Ovary (tissue), 10 donors: ENCODE measurements at regions of chr2 and their contacts with region 1.

Region 1: GRCh38 chr2:26846328-26847306 is 1.3 kb upstream of the DPYSL5 start:
- DNase-seq: peak; percentile 48 to 74 (median 62)
- H3K4me3 ChIP-seq: no peak overlapping the region
- H3K27ac ChIP-seq: no peak overlapping the region
- H3K4me1 ChIP-seq: peaks cover 13% of the 10 kb centered on the region
- H3K27me3 ChIP-seq: peaks cover 5% of the 10 kb centered on the region
- CTCF ChIP-seq: peak; percentile 57 to 60 (median 59)
- EP300 ChIP-seq: no peak
- POLR2A ChIP-seq: no peak

Region 2: GRCh38 chr2:26911911-26912861 is 65.6 kb after region 1 on chr2:
- intact Hi-C with region 1: no loop called
- DNase-seq: no peak
- H3K4me3 ChIP-seq: no peak overlapping the region
- H3K27ac ChIP-seq: no peak overlapping the region
- H3K4me1 ChIP-seq: no peaks in the 10 kb centered on the region
- H3K27me3 ChIP-seq: no peaks in the 10 kb centered on the region
- CTCF ChIP-seq: no peak
- EP300 ChIP-seq: no peak
- POLR2A ChIP-seq: no peak

Region 3: DNA sequence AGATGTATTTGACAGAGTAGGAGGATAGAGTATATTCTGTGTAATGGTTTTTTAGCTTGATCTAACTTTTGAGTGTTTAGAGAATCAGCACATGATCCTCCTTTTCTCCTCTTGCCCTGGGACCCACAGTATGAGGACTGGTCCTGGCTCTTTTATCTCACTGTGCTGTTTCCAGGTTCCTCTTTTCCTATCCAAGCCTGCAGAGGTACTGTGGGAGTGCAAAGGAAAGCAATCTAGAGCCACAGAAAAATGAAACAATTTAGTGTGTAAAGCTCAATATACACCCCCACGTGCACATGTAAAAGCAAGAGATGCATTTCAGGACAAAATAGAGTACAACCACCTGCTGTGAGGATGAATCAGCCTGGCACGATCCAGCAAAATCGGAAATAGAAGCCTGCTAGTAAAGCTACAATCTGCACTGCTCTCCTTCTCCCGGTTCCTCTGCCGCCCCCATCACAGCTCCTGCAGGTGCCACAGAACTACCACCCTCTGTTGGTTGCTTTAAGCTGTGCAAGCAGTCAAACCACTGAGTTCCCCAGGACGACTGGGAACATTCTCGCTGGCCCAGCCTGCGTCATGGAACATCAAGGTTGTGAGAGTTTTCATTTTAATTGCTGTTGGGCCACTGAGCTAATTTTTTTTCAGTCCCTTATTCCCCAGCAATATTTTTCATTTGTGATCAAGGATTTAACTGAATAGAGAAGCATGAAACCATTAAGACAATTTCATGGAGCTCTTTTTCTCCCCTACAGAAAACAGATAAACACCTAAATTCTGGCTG is 76.0 kb after region 1 on chr2:
- intact Hi-C with region 1: loop called in 1 of 4 experiments (anchors 10 kb)
- DNase-seq: peak in 4 of 5 donors; percentile 33 to 58 (median 42)
- H3K4me3 ChIP-seq: no peak overlapping the region
- H3K27ac ChIP-seq: no peak overlapping the region
- H3K4me1 ChIP-seq: peaks cover 3% of the 10 kb centered on the region
- H3K27me3 ChIP-seq: no peaks in the 10 kb centered on the region
- CTCF ChIP-seq: peak in 1 of 3 donors; percentile 31
- EP300 ChIP-seq: no peak
- POLR2A ChIP-seq: no peak

Region 4: DNA sequence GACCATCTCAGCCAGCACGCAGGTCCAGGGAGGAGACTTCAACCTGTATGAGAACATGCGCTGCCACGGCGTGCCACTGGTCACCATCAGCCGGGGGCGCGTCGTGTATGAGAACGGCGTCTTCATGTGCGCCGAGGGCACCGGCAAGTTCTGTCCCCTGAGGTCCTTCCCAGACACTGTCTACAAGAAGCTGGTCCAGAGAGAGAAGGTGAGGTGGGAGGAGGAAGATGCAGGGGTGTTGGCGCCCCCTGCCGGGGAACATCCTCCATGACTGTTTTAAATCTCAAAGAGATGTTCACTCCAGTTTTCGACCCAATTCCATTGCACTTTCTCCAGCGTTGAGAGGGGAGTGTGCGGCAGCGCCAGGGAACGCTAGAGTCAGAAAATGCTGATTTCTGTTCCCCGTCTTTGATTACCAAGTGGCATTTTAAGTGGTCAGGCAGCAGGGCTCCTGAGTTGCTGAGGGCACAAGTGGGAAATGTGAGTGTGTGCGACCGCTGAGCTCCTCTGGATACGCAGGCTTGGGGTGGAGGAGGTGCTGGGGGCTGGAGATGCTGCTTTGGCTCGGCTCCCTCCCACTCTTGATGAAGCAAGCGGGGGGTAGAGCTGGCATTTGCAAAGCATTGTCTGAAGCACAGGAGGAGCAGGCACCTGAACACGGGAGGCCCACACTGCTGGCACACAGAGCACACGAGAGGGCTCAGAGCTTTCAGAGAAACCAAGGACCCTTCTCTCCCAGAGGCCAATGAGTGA is 96.1 kb after region 1 on chr2:
- intact Hi-C with region 1: loop called in 3 of 4 experiments (anchors 2 to 5 kb)
- DNase-seq: peak in 4 of 5 donors; percentile 34 to 77 (median 56)
- H3K4me3 ChIP-seq: no peak overlapping the region
- H3K27ac ChIP-seq: no peak overlapping the region
- H3K4me1 ChIP-seq: no peaks in the 10 kb centered on the region
- H3K27me3 ChIP-seq: no peaks in the 10 kb centered on the region
- CTCF ChIP-seq: peak; percentile 13 to 46 (median 30)
- EP300 ChIP-seq: no peak
- POLR2A ChIP-seq: no peak

Region 5: GRCh38 chr2:27016801-27017325 is 170.2 kb after region 1 on chr2:
- intact Hi-C with region 1: loop called in 2 of 4 experiments (anchors 10 kb)
- DNase-seq: peak; percentile 62 to 79 (median 74)
- H3K4me3 ChIP-seq: no peak overlapping the region
- H3K27ac ChIP-seq: peak overlapping the region in 1 of 2 donors; percentile 27
- H3K4me1 ChIP-seq: peaks cover 20% of the 10 kb centered on the region
- H3K27me3 ChIP-seq: no peaks in the 10 kb centered on the region
- CTCF ChIP-seq: peak; percentile 51 to 80 (median 77)
- EP300 ChIP-seq: no peak
- POLR2A ChIP-seq: peak; percentile 16

Region 6: DNA sequence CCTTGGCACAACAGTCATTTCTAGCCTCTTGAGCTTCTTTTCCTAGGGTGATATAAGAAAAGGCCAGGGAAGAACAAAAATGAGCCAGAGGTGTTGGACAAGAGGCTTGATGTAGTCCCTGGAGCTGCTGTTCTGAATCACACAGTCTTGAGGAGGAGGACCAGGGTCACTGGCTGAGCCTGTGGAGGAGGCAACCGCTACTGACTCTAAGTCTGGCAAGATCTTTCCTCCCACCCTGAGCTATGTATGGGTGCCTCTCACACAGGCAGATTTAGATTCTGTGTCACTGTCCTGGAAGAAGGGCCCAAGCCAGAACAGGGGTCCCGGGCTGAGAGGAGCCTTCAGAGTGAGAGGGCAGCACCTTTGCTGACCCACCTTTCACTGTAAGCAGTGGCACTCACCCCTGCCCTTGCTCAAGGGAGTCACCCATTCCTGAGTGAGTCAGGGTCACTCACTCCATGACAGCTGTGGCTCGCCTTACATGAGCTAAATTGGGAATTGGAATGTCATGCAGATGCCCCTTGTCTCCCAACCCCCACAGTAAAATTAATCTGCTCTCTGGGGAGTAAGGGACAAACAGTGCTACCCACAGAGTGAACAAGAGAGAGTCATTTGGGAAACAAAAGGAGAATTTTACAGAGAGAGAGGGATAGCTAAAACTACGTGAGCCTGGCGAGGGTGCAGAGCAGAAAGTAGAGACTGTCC is 435.4 kb after region 1 on chr2 and contains the start of gene TRIM54:
- intact Hi-C with region 1: loop called in 2 of 4 experiments (anchors 10 kb)
- DNase-seq: no peak
- H3K4me3 ChIP-seq: no peak within 1 kb of the TSS
- H3K27ac ChIP-seq: no peak within 1 kb of the TSS
- H3K4me1 ChIP-seq: no peaks in the 10 kb centered on the region
- H3K27me3 ChIP-seq: no peaks in the 10 kb centered on the region
- CTCF ChIP-seq: no peak
- EP300 ChIP-seq: no peak
- POLR2A ChIP-seq: no peak
- total RNA-seq, gene TRIM54: 0.12 to 0.72 (median 0.49) TPM in 4 of 7 donors, not detected in the others

Region 7: DNA sequence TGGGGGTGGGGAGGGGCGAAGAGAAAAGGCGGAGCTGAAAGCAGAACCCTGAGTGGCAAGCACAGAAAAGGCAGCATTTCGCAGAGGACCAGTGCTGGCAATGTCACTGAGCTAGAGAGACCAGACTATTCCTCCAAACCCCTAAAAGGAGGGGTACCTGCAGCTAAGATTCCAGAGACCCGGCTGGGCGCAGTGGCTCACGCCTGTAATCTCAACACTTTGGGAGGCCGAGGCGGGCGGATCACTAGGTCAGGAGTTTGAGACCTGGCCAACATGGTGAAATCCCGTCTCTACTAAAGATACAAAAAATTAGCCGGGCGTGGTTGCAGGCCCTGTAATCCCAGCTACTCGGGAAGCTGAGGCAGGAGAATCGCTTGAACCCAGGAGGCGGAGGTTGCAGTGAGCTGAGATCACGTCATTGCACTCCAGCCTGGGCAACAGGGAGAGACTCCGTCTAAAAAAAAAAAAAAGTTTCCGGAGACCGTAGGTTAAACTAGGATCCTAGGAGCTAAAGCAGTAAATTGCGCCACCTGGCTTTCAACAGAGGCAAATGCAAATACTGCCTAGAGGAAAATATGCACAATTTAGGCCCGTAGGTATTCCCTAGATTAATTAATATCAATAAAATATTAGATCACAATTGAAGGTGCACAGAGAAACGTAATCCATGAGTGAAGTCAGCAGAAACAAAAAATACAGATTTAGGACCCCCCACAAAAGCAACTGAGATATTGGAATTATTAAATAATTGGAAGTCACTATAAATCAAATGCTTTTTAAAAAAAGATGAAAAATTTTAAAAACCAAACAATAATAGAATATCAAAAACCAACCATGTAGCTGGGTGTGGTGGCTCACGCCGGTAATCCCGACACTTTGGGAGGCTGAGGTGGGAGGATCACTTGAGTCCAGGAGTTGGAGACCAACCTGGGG is 456.7 kb after region 1 on chr2:
- intact Hi-C with region 1: loop called in 1 of 4 experiments (anchors 10 kb)
- DNase-seq: peak in 1 of 5 donors; percentile 38
- H3K4me3 ChIP-seq: peak overlapping the region; percentile 30
- H3K27ac ChIP-seq: no peak overlapping the region
- H3K4me1 ChIP-seq: peaks cover 4% of the 10 kb centered on the region
- H3K27me3 ChIP-seq: peaks cover 4% of the 10 kb centered on the region
- CTCF ChIP-seq: peak; percentile 63 to 72 (median 64)
- EP300 ChIP-seq: no peak
- POLR2A ChIP-seq: no peak